ENCODE measurements at regions of chr9 and their contacts with region 1.

Region 1: DNA sequence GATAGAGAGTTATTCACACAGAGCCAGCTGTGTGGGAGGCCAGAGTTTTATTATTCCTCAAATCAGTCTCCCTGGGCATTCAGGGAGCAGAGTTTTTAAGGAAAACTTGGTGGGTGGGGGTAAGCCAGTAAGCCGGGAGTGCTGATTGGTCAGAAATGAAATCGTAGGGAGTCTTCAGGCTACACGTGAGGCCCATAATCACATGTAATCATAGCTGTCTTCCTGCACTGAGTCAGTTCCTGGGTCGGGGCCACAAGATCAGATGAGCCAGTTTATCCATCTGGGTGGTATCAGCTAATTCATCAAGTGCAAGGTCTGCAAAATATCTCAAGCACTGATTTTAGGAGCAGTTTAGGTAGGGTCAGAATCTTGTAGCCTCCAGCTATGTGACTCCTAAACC is 10.8 kb upstream of the TTC39B start:
- DNase-seq: no peak
- ATAC-seq: no peak
- H3K4me3 ChIP-seq: no peak overlapping the region
- H3K27ac ChIP-seq: no peak overlapping the region
- H3K4me1 ChIP-seq: no peaks in the 10 kb centered on the region
- H3K27me3 ChIP-seq: no peaks in the 10 kb centered on the region
- CTCF ChIP-seq: no peak

Region 2: DNA sequence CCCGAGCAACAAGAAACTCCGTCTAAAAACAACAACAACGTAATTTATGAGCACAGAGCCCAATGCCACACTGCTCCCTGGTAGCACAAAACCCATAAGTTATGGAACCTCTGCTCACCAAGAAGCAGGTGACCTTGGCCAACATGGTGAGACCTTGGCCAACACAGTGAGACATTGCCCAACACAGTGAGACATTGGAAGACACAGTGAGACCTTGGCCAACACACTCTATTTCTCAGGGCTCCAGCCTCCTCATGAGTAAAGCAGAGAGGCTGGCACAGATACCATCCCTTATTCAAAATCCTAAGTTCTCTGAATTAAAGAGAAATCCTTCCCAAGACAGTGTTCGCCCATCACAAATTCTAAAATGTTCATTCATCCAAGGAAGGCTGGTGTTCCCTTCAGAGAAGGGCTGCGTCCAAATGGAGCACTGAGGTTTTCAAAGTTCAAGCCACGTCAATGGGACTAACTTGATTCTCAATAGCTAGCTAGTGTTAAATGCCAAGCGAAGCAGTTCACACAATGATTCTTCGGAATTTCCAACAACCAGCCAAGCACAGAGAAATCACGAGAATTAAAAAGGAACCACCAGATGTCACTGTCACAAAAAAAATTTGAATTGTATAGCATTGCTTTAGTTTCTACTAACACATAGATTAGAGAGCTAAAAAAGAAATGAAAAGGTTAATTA is 40.3 kb before region 1 on chr9:
- intact Hi-C with region 1: no loop called
- DNase-seq: no peak
- ATAC-seq: peak in 3 of 8 donors; percentile 49 to 57 (median 51)
- H3K4me3 ChIP-seq: no peak overlapping the region
- H3K27ac ChIP-seq: no peak overlapping the region
- H3K4me1 ChIP-seq: no peaks in the 10 kb centered on the region
- H3K27me3 ChIP-seq: no peaks in the 10 kb centered on the region
- CTCF ChIP-seq: peak in 7 of 9 donors; percentile 30 to 56 (median 51)

Region 3: DNA sequence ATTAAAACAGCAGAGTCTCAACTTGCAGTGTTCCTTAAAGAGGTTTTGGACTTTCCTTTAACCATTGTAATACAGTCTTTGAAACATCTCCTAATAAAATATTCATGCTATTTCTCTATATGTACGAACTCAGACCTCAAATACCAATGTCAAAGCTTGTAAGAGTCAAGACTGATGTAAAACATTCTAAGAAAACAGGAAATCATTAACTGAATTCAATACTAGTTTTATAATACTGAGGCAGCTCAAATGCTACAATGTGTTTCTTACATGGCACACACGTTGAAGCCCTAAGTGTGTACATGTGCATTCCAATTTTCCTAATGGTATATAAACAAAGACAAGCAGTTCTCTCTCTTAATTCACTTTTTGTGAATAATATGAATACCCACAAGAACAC is 181.3 kb after region 1 on chr9:
- intact Hi-C with region 1: loop called in 1 of 10 experiments (anchors 10 kb)
- DNase-seq: no peak
- ATAC-seq: no peak
- H3K4me3 ChIP-seq: no peak overlapping the region
- H3K27ac ChIP-seq: no peak overlapping the region
- H3K4me1 ChIP-seq: peaks cover 0 to 10% (median 0%) of the 10 kb centered on the region in 9 donors
- H3K27me3 ChIP-seq: no peaks in the 10 kb centered on the region
- CTCF ChIP-seq: no peak

Region 4: DNA sequence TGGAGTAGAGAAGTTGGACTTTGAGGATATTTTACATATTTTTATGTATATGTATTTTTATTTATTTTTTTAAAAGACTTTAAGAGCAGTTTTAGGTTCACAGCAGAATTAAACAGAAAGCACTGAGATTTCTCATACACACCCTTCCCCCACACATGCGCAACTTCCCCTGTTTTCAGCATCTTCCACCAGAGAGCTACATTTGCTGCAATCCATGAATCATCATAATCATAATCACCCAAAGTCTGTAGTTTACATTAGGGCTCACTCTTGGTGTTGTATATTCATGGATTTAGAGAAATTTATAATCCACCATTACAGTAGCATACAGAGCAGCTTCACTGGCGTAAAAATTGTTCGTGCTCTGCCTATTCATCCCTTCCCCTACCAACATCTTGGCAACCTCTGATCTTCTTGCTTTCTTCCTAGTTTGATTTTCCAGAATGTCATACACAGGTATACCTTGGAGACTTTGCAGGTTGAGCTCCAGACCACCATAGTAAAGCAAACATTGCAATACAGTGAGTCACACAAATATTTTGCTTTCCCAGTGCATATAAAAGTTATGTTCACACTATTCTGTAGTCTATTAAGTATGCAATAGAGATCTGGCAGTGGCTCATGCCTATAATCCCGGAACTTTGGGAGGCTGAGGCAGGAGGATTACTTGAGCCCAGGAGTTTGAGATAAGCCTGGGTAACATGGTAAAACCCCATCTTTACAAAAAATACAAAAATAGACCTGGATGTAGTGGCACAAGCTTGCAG is 225.4 kb after region 1 on chr9:
- intact Hi-C with region 1: no loop called
- DNase-seq: no peak
- ATAC-seq: no peak
- H3K4me3 ChIP-seq: no peak overlapping the region
- H3K27ac ChIP-seq: no peak overlapping the region
- H3K4me1 ChIP-seq: no peaks in the 10 kb centered on the region
- H3K27me3 ChIP-seq: peaks cover 0 to 4% (median 0%) of the 10 kb centered on the region in 7 donors
- CTCF ChIP-seq: no peak

Region 5: GRCh38 chr9:17005056-17005823 is 1687.4 kb after region 1 on chr9:
- intact Hi-C with region 1: no loop called
- DNase-seq: peak; percentile 17 to 25
- ATAC-seq: peak in 6 of 8 donors; percentile 41 to 86 (median 68)
- H3K4me3 ChIP-seq: peak overlapping the region in 4 of 10 donors; percentile 6 to 21 (median 17)
- H3K27ac ChIP-seq: peak overlapping the region in 2 of 10 donors; percentile 2
- H3K4me1 ChIP-seq: no peaks in the 10 kb centered on the region
- H3K27me3 ChIP-seq: no peaks in the 10 kb centered on the region
- CTCF ChIP-seq: no peak

Measured in heart right ventricle (tissue), 16 donors.